Endothelial cell of umbilical vein (primary cell): ENCODE measurements at regions of chr4 and their contacts with region 1.

Region 1: DNA sequence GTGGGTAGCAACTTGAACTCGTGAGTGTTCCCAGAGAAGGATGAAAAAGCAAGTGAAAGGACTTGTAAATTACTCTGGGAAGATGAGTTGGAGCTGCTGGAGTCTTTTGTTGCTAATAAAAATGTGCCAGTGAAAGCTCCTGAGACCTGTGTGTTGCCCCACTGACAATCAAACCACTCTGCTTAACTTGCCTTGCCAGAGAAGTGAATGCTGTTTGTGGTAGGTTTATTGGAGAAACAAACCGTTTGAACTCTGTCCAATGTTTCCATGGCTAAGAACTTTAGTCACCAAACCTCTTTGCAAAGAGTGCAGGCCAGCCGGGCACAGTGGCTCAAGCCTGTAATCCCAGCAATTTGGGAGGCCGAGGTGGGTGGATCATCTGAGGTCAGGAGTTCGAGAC is 586.9 kb downstream of the PCDH7 start:
- DNase-seq: no peak
- H3K4me3 ChIP-seq: no peak overlapping the region
- H3K27ac ChIP-seq: no peak overlapping the region
- H3K4me1 ChIP-seq: no peaks in the 10 kb centered on the region
- H3K27me3 ChIP-seq: peaks cover 0 to 1% of the 10 kb centered on the region in 2 experiments
- CTCF ChIP-seq: no peak
- POLR2A ChIP-seq: no peak

Region 2: GRCh38 chr4:31261632-31262031 is 45.4 kb before region 1 on chr4:
- CTCF ChIA-PET with region 1: no interaction called
- POLR2A ChIA-PET with region 1: no interaction called
- dilution Hi-C with region 1: no loop called
- intact Hi-C with region 1: loop called (anchors 1 kb)
- DNase-seq: no peak
- H3K4me3 ChIP-seq: no peak overlapping the region
- H3K27ac ChIP-seq: no peak overlapping the region
- H3K4me1 ChIP-seq: no peaks in the 10 kb centered on the region
- H3K27me3 ChIP-seq: no peaks in the 10 kb centered on the region
- CTCF ChIP-seq: no peak
- POLR2A ChIP-seq: no peak